Activated CD8-positive, alpha-beta memory T cell treated with anti-CD3 and anti-CD28 coated beads, Interleukin-2, amount 10 ng/mL, durations not matched to agents 7 days and 5 days (primary cell): ENCODE measurements at regions of chr5 and their contacts with region 1.

Region 1: DNA sequence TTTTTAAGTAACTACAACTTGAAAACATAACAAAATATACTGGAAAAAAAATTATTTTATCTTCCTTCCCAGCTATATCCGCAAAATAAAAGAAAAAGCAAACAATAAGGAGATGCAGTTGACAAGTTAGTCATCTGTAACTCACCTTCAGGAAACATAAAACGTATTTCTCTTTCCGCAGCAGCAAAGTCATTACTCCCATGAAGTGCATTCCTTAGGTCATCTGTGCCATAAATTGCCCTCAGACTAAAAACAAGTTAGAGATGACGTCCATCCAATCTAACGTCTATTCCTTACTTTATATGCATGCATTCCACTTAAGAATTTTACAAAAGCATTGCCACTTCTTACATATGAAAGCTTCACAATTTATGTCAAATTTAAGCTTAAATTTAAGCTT is 10.9 kb downstream of the NME5 start:
- DNase-seq: no peak
- ATAC-seq: no peak
- H3K4me3 Mint-ChIP-seq: no peak overlapping the region
- H3K27ac Mint-ChIP-seq: no peak overlapping the region
- H3K4me1 Mint-ChIP-seq: peaks cover 2% of the 10 kb centered on the region
- H3K27me3 Mint-ChIP-seq: peaks cover 33% of the 10 kb centered on the region

Region 2: GRCh38 chr5:138148811-138149210 is 20.5 kb after region 1 on chr5:
- CTCF ChIA-PET with region 1: interaction called, 11 read pairs
- DNase-seq: no peak
- ATAC-seq: no peak
- H3K4me3 Mint-ChIP-seq: no peak overlapping the region
- H3K27ac Mint-ChIP-seq: no peak overlapping the region
- H3K4me1 Mint-ChIP-seq: no peaks in the 10 kb centered on the region
- H3K27me3 Mint-ChIP-seq: peaks cover under 1% of the 10 kb centered on the region